T-cell (primary cell): ENCODE measurements at regions of chr3 and their contacts with region 1.

Region 1: DNA sequence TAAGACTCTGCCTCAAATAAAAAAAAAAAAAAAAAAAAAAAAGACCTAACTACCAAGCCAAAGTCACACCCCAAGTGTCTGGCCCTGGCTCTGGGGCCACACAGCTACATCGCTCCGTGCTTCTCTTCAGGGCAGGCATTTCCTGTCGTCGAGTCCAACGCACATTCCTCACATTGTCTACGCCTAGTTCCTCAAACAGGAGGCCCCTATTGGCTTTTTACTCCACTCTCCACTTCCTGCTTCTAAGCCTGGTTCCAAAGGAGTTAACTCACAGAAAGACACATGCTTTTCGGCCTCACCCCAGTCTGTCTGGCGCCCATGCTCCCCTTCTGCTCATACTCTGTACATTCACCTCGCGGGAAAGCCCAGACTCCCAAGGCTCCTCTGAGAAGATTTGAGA is 28.8 kb downstream of the KNG1 start:
- DNase-seq: peak in 1 of 35 experiments; percentile 18
- ATAC-seq: peak in 1 of 4 experiments; percentile 46
- H3K4me3 ChIP-seq: no peak overlapping the region
- H3K4me3 Mint-ChIP-seq: no peak overlapping the region
- H3K27ac ChIP-seq: no peak overlapping the region
- H3K27ac Mint-ChIP-seq: no peak overlapping the region
- H3K4me1 ChIP-seq: no peaks in the 10 kb centered on the region
- H3K4me1 Mint-ChIP-seq: peaks cover 0 to 5% (median 3%) of the 10 kb centered on the region in 3 donors
- H3K27me3 ChIP-seq: peaks cover 0 to 3% of the 10 kb centered on the region in 2 experiments
- H3K27me3 Mint-ChIP-seq: no peaks in the 10 kb centered on the region

Region 2: DNA sequence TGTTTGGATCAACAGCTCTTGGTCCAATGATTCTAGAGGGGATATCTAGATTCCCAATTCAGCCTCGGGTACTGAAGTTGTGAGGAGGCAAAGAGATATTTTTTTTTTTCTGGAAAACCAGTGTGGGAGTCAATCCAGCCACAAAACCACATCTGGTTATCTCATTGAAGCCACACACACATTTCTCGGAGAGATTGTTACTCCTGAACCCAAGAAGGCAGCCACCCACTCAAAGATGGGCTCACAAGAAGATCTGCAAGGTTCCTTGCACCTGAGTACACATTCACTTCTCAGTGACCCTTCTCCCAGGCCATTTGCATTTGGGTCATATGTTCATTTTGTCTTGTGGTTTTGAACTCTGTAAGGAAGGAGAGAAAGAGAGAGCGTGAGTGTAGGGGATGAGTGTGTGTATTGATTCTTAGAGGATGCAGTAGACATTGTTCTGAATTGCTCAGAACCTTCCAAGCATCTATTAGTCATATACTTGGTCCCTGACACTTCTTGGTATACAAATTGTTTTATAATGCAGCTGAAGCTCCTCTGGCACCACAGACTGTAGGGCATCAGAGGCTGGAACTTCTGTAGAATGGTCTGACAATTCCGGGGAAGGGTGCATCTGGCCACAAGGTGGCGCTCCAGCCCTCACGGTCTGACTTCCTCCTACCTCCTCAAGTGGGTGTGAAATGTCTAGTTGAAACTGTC is 768.9 kb before region 1 on chr3:
- CTCF ChIA-PET with region 1: no interaction called
- POLR2A ChIA-PET with region 1: interaction called in 1 of 2 experiments, 14 read pairs
- DNase-seq: peak; percentile 45 to 86 (median 71)
- ATAC-seq: peak; percentile 88 to 91 (median 89)
- H3K4me3 ChIP-seq: no peak overlapping the region
- H3K4me3 Mint-ChIP-seq: no peak overlapping the region
- H3K27ac ChIP-seq: no peak overlapping the region
- H3K27ac Mint-ChIP-seq: peak overlapping the region in 1 of 2 donors; percentile 34
- H3K4me1 ChIP-seq: peaks cover 0 to 2% of the 10 kb centered on the region in 2 experiments
- H3K4me1 Mint-ChIP-seq: peaks cover 6 to 9% (median 8%) of the 10 kb centered on the region in 3 donors
- H3K27me3 ChIP-seq: no peaks in the 10 kb centered on the region
- H3K27me3 Mint-ChIP-seq: peaks cover 0 to 4% of the 10 kb centered on the region in 2 donors

Region 3: DNA sequence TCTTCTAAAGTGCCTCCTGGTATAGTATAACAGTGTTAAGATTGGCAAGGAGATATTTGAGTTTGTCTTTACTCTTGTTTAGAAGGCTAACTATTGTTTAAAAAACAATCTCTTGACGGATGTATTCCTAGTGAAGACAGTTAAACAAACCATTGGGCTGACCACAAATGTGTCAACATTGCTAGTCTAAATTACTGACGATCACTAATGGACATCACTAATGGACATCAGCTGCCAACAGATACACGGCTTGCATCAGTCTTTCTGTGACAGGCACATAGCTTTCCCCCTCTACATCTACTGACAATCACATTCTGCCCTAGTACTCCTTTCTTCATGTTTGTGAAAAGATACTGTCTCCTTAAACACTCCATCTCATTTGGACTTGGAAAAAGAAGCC is 580.0 kb before region 1 on chr3:
- CTCF ChIA-PET with region 1: no interaction called
- POLR2A ChIA-PET with region 1: no interaction called
- DNase-seq: no peak
- ATAC-seq: no peak
- H3K4me3 ChIP-seq: no peak overlapping the region
- H3K4me3 Mint-ChIP-seq: no peak overlapping the region
- H3K27ac ChIP-seq: no peak overlapping the region
- H3K27ac Mint-ChIP-seq: no peak overlapping the region
- H3K4me1 ChIP-seq: no peaks in the 10 kb centered on the region
- H3K4me1 Mint-ChIP-seq: no peaks in the 10 kb centered on the region
- H3K27me3 ChIP-seq: peaks cover 0 to 12% of the 10 kb centered on the region in 2 experiments
- H3K27me3 Mint-ChIP-seq: peaks cover 21 to 36% of the 10 kb centered on the region in 2 donors

Region 4: GRCh38 chr3:186551387-186551786 is 194.6 kb before region 1 on chr3:
- CTCF ChIA-PET with region 1: no interaction called
- POLR2A ChIA-PET with region 1: no interaction called
- DNase-seq: no peak
- ATAC-seq: no peak
- H3K4me3 ChIP-seq: no peak overlapping the region
- H3K4me3 Mint-ChIP-seq: no peak overlapping the region
- H3K27ac ChIP-seq: no peak overlapping the region
- H3K27ac Mint-ChIP-seq: no peak overlapping the region
- H3K4me1 ChIP-seq: no peaks in the 10 kb centered on the region
- H3K4me1 Mint-ChIP-seq: no peaks in the 10 kb centered on the region
- H3K27me3 ChIP-seq: no peaks in the 10 kb centered on the region
- H3K27me3 Mint-ChIP-seq: no peaks in the 10 kb centered on the region

Region 5: GRCh38 chr3:186722456-186722855 is 23.6 kb before region 1 on chr3:
- CTCF ChIA-PET with region 1: no interaction called
- POLR2A ChIA-PET with region 1: no interaction called
- DNase-seq: no peak
- ATAC-seq: no peak
- H3K4me3 ChIP-seq: no peak overlapping the region
- H3K4me3 Mint-ChIP-seq: no peak overlapping the region
- H3K27ac ChIP-seq: no peak overlapping the region
- H3K27ac Mint-ChIP-seq: no peak overlapping the region
- H3K4me1 ChIP-seq: no peaks in the 10 kb centered on the region
- H3K4me1 Mint-ChIP-seq: no peaks in the 10 kb centered on the region
- H3K27me3 ChIP-seq: peaks cover 0 to 2% of the 10 kb centered on the region in 2 experiments
- H3K27me3 Mint-ChIP-seq: no peaks in the 10 kb centered on the region